ENCODE measurements at regions of chr6 and their contacts with region 1.

Region 1: GRCh38 chr6:109705258-109705657 is 14.2 kb downstream of the FIG4 start:
- DNase-seq: peak; percentile 80 to 96
- H3K4me3 ChIP-seq: no peak overlapping the region
- H3K27ac ChIP-seq: no peak overlapping the region
- H3K4me1 ChIP-seq: peaks cover 0 to 44% (median 12%) of the 10 kb centered on the region in 4 donors
- H3K27me3 ChIP-seq: no peaks in the 10 kb centered on the region
- CTCF ChIP-seq: peak in 6 of 7 experiments; percentile 30 to 99 (median 90)
- EP300 ChIP-seq: no peak
- POLR2A ChIP-seq: no peak

Region 2: GRCh38 chr6:109760208-109760607 is 55.0 kb after region 1 on chr6:
- intact Hi-C with region 1: no loop called
- DNase-seq: peak in 1 of 2 donors; percentile 12
- H3K4me3 ChIP-seq: no peak overlapping the region
- H3K27ac ChIP-seq: no peak overlapping the region
- H3K4me1 ChIP-seq: peaks cover 0 to 17% (median 6%) of the 10 kb centered on the region in 4 donors
- H3K27me3 ChIP-seq: no peaks in the 10 kb centered on the region
- CTCF ChIP-seq: no peak
- EP300 ChIP-seq: no peak
- POLR2A ChIP-seq: no peak

Region 3: GRCh38 chr6:110039981-110040383 is 334.7 kb after region 1 on chr6:
- intact Hi-C with region 1: loop called (anchors 5 kb)
- DNase-seq: peak; percentile 49 to 76
- H3K4me3 ChIP-seq: peak overlapping the region; percentile 26 to 47 (median 42)
- H3K27ac ChIP-seq: peak overlapping the region in 4 of 5 donors; percentile 18 to 69 (median 62)
- H3K4me1 ChIP-seq: peaks cover 0 to 15% (median 8%) of the 10 kb centered on the region in 4 donors
- H3K27me3 ChIP-seq: no peaks in the 10 kb centered on the region
- CTCF ChIP-seq: peak in 3 of 7 experiments; percentile 9 to 60 (median 30)
- EP300 ChIP-seq: no peak
- POLR2A ChIP-seq: no peak